ENCODE measurements at regions of chr6 and their contacts with region 1.

Region 1: DNA sequence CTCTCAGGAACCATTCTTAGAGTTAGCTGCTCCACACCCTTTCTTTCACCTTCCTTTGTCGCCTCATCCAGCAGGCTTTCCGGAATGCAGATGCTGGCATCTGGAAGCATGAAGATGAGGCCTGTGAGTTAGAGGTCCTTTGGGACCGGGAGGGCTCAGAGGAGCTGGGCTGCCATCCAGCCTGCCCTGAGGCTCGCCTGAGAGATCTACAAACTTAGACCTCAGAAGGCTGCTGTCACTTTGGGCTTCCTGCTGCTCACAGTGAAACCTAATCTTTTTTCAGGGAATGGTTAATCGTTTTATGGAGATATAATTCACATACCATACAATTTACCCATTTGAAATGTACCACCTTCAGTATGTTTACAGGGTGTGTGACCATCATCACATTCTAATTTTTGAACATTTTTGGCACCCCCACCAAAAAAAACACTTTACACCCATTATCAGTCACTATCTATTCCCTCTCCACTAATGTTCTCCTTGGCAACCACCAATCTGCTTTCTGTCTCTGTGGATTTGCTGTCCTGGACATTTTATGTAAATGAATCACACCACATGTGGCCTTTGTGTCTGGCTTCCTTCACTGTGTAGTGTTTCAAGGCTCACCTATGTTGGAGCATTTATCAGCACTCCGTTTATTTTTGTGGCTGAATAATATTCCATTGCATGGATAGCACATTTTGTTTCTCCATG is 20.0 kb upstream of the MPC1 start:
- DNase-seq: no peak
- ATAC-seq: no peak
- H3K4me3 ChIP-seq: no peak overlapping the region
- H3K27ac ChIP-seq: no peak overlapping the region
- H3K4me1 ChIP-seq: no peaks in the 10 kb centered on the region
- H3K27me3 ChIP-seq: no peaks in the 10 kb centered on the region

Region 2: DNA sequence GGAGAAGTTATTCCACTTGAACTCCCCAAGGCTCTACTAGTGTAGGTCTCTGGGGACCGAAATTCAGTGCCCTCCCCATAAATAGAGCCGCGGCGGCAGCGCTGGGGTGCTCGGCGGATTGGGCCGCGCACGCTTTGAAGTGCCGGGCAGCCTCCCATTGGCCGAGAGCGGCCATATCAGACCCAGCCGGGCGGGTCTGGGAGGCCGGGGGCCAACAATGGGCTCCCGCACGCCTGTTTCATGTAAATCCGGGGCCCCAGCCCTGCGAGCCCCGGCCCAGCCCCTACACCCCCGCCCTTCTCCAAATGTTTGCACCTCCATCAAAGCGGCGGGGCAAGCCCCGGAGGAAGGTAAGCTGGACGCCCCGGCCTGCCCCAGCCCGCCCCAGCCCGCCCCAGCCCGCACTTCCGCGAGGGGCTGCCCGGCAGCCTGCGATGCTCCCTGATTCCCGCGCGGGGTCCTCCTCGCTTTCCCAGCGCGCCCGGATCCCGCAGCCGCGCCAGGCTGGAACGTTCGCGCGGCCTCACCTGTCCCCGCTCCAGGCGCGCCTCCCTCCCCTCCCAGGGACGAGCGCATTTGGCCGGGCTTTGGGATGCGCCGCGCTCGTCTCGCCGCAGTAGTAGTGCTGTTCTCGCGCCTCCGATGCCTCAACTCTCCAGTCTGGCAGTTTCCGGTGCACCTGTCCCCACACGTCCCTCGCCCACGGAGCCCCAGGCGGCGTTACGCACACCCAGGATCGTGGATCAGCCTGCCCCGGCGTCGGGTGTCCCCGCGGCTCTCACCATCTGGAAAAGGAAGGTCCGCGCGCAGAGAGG is 234.7 kb before region 1 on chr6 and contains the start of gene TBXT:
- intact Hi-C with region 1: loop called in 1 of 4 experiments (anchors 10 kb)
- DNase-seq: no peak
- ATAC-seq: no peak
- H3K4me3 ChIP-seq: peak within 1 kb of the TSS; percentile 8
- H3K27ac ChIP-seq: no peak within 1 kb of the TSS
- H3K4me1 ChIP-seq: peaks cover 2% of the 10 kb centered on the region
- H3K27me3 ChIP-seq: no peaks in the 10 kb centered on the region
- total RNA-seq, gene TBXT: not detected

Region 3: DNA sequence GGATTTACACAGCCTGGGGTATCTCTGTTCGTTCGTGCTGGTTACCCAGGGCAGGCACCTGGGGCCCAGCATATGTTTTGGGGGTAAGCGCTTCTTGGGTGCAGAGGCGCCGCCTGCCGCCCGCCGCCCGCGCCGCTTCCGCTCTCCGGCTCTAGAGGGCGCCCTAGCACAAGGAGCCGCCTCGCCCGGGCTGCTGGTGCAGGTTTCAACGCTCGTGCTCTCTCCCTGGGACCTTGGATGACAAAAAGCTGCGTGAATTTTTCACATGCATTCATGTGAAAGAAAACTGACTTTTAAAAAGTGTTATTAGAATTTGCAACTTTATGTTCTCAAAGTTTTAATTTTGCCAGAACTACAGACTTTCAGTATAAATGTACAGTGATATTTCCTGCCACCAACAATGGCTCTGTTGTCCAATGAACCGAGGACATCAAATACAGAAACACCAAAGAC is 127.0 kb before region 1 on chr6:
- intact Hi-C with region 1: loop called (anchors 2 to 10 kb)
- DNase-seq: peak; percentile 50 to 87 (median 84)
- ATAC-seq: peak; percentile 73 to 86
- H3K4me3 ChIP-seq: no peak overlapping the region
- H3K27ac ChIP-seq: no peak overlapping the region
- H3K4me1 ChIP-seq: no peaks in the 10 kb centered on the region
- H3K27me3 ChIP-seq: no peaks in the 10 kb centered on the region

Region 4: DNA sequence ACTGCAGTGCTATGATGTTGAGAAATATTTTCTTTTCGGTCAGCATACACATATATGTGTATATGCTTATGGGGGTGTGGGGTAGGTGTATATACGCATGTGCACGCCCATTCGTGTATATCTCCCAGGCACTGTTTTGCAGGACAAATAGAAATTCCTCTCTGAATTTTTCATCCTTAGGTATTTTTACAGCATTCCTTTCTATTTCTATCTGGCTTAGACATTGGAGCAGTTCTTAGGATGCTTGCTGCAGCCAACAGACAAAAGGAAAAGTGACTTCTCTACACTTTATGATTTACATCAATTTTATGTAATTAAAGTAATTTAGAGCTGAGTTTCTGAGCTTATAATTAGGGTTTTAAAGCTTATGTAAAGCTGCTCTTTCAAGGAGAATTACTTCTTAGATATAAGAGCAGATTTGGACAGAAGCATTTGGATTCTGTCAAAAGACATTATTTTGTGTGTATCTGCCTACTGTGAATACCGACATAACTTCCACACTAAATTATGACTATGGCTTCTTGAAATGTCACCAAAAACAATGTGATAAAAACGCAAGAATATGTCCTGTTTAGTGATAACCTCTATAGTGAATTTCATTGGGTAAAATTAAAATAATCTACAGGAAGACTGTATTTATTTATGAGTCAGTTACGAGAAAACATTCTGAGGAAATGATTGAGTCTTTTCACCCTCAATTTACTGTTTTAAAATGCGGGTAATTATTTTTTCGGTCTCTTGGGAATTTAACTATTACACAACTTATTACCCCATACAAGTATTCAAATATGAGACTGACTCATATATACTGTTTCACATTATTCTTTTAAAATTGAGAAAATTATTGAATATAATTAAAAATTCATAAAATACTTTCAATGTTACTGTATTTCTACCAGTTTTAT is 575.1 kb after region 1 on chr6:
- intact Hi-C with region 1: no loop called
- DNase-seq: no peak
- ATAC-seq: no peak
- H3K4me3 ChIP-seq: no peak overlapping the region
- H3K27ac ChIP-seq: no peak overlapping the region
- H3K4me1 ChIP-seq: no peaks in the 10 kb centered on the region
- H3K27me3 ChIP-seq: no peaks in the 10 kb centered on the region

Measured in right cardiac atrium (tissue), 5 donors.